ENCODE measurements at regions of chr16 and their contacts with region 1.

Region 1: DNA sequence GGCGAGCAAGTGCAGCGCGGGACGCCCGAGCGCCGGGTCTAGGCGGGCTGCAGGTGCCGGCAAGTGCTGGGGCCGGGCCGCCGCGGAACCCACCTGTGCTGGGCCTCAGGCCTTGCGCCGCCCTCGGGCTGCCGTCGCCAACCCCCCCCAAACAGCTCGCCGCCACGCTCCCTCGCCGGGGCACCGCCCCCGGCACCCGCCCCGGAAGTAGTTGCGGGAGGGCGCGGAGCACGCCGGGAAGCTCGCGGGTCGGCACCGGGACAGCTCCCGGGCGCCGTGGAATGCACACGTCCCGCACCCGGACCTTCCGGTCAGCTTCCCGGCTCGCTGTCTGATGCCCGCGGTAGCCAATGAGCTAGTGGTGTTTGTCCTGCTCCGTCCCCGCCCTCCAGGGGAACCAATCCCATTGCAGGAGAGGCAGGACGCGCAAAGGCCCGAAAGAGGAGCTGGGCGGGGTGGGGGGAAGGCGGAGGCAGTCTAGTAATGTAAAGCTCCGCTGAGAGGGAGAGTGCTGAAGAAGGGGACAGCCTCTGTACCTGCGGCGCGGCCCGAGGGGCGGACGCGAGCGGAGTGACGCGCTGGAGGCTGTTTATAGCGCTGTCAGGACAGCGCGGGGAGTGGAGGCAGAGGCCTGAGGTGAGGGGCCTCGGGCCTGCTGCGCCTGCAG is at the starts of genes ANKS3 and DNAAF8:
- DNase-seq: peak; percentile 76 to 84 (median 78)
- H3K4me3 ChIP-seq: peak within 1 kb of the TSS; percentile 88 to 99
- H3K4me3 Mint-ChIP-seq: peak within 1 kb of the TSS; percentile 91 to 94 (median 92)
- H3K27ac ChIP-seq: peak within 1 kb of the TSS; percentile 76
- H3K27ac Mint-ChIP-seq: peak within 1 kb of the TSS; percentile 90 to 96 (median 93)
- H3K4me1 ChIP-seq: peaks cover 15% of the 10 kb centered on the region
- H3K4me1 Mint-ChIP-seq: peaks cover 11 to 30% (median 21%) of the 10 kb centered on the region in 4 donors
- H3K27me3 ChIP-seq: no peaks in the 10 kb centered on the region
- H3K27me3 Mint-ChIP-seq: no peaks in the 10 kb centered on the region
- total RNA-seq, gene ANKS3: 28.5 to 33.9 TPM
- total RNA-seq, gene DNAAF8: 0.12 to 0.64 TPM

Region 2: DNA sequence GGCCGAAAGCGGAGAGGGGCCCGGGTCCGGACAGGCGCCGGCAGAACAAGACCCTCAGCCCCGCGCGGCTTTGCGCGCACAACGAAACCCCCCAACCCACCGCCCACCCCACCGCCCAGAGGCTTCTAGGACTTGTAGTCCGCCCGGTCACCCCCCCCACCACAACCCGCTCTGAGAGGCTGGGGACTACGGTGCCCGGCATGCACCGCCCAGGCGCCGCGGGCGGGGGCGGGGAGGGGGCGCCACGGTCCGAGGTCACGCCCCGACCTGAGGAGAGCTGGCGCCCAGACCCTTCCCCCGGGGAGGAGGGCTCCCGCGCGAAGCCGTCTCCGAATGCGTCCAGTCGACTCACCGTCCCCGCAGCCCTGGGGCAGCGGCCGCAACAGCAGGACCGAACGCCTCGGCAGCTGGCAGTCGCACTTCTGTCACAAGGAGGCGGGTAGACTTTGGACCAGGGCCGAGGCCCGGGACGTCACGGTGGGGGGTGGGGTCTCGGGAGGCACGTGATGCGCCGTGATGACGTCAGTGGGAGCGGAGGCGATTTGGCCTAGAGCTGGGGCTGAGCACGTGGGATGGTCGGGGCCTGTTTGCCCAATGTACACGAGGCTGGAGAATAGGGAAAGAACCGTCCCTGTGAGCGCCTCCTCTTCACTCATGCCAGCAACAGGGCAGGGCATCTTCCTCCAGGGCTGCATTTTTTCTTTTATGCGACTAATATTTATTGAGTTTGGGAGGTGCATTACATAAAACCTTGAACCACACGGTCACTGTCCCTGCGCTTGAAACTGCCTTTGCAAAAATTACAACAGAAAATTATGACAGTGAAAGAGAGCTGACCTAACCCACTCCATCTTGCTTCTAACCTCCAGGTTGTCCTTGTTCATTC is 195.6 kb before region 1 on chr16 and contains the start of gene CDIP1:
- CTCF ChIA-PET with region 1: no interaction called
- POLR2A ChIA-PET with region 1: no interaction called
- intact Hi-C with region 1: no loop called
- DNase-seq: peak; percentile 89 to 94 (median 90)
- H3K4me3 ChIP-seq: peak within 1 kb of the TSS; percentile 69 to 92
- H3K4me3 Mint-ChIP-seq: peak within 1 kb of the TSS; percentile 82 to 89 (median 84)
- H3K27ac ChIP-seq: peak within 1 kb of the TSS; percentile 77
- H3K27ac Mint-ChIP-seq: peak within 1 kb of the TSS; percentile 89 to 97 (median 94)
- H3K4me1 ChIP-seq: peaks cover 30% of the 10 kb centered on the region
- H3K4me1 Mint-ChIP-seq: peaks cover 18 to 35% (median 27%) of the 10 kb centered on the region in 4 donors
- H3K27me3 ChIP-seq: no peaks in the 10 kb centered on the region
- H3K27me3 Mint-ChIP-seq: no peaks in the 10 kb centered on the region
- total RNA-seq, gene CDIP1: 19.0 to 21.1 TPM

Region 3: DNA sequence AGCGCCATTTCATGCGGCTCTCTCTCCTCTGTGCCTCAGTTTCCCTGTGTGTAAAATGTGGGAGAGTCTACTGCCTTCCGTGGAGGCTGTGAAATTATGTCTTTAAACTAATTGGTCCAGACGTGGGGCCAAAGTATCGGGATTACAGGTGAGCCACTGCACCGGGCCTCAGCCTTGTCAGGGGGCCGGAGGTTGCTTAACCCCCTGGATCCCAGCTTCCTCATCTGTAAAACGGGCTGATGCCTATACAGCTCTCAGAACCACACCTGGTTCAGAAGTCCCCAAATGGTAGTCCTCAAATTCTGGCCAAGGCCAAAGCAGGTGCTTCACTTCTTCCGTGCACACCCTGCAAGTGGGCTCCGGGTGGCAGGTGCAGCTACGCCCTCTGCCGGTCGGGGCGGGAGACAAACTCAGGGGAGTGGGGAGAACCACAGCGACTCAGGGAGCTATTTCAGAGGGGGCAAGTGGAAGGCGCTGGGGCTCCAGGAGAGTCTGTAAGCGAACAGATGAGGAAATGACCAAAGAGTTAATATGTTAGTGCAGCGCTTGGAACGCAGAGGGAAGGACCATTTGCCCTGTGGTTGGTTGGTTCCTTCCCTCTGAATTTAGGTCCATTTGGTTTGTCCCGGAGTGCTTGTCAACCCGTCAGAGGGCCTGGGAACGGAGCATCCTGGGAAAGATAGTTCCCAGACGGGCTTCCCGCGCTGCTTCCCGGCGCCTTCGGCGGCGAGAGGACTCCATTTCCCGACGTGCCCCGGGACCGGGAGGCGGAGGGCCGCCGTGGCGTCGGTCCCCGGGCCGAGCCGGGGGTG is 110.0 kb before region 1 on chr16 and contains the start of gene MGRN1:
- CTCF ChIA-PET with region 1: interaction called, 17 read pairs
- POLR2A ChIA-PET with region 1: interaction called, 7 read pairs
- intact Hi-C with region 1: loop called (anchors 2 kb)
- DNase-seq: peak; percentile 93 to 95 (median 94)
- H3K4me3 ChIP-seq: peak within 1 kb of the TSS; percentile 38 to 81
- H3K4me3 Mint-ChIP-seq: peak within 1 kb of the TSS; percentile 92 to 99 (median 95)
- H3K27ac ChIP-seq: peak within 1 kb of the TSS; percentile 94
- H3K27ac Mint-ChIP-seq: peak within 1 kb of the TSS; percentile 92 to 100 (median 99)
- H3K4me1 ChIP-seq: peaks cover 25% of the 10 kb centered on the region
- H3K4me1 Mint-ChIP-seq: peaks cover 20 to 46% (median 34%) of the 10 kb centered on the region in 4 donors
- H3K27me3 ChIP-seq: no peaks in the 10 kb centered on the region
- H3K27me3 Mint-ChIP-seq: no peaks in the 10 kb centered on the region
- total RNA-seq, gene MGRN1: 62.2 to 64.1 TPM

Region 4: GRCh38 chr16:4693296-4693955 is 40.8 kb before region 1 on chr16 and contains the start of gene NUDT16L1:
- CTCF ChIA-PET with region 1: interaction called, 4 read pairs
- POLR2A ChIA-PET with region 1: interaction called, 40 read pairs
- intact Hi-C with region 1: loop called (anchors 1 kb)
- DNase-seq: peak; percentile 94 to 99 (median 98)
- H3K4me3 ChIP-seq: peak within 1 kb of the TSS; percentile 61 to 81
- H3K4me3 Mint-ChIP-seq: peak within 1 kb of the TSS; percentile 85 to 92 (median 88)
- H3K27ac ChIP-seq: peak within 1 kb of the TSS; percentile 81
- H3K27ac Mint-ChIP-seq: peak within 1 kb of the TSS; percentile 84 to 93 (median 91)
- H3K4me1 ChIP-seq: peaks cover 21% of the 10 kb centered on the region
- H3K4me1 Mint-ChIP-seq: peaks cover 2 to 22% (median 9%) of the 10 kb centered on the region in 4 donors
- H3K27me3 ChIP-seq: no peaks in the 10 kb centered on the region
- H3K27me3 Mint-ChIP-seq: no peaks in the 10 kb centered on the region
- total RNA-seq, gene NUDT16L1: 52.4 to 53.7 TPM

Region 5: GRCh38 chr16:4755687-4756086 is 21.5 kb after region 1 on chr16:
- CTCF ChIA-PET with region 1: no interaction called
- POLR2A ChIA-PET with region 1: no interaction called
- intact Hi-C with region 1: no loop called
- DNase-seq: no peak
- H3K4me3 ChIP-seq: no peak overlapping the region
- H3K4me3 Mint-ChIP-seq: no peak overlapping the region
- H3K27ac ChIP-seq: no peak overlapping the region
- H3K27ac Mint-ChIP-seq: no peak overlapping the region
- H3K4me1 ChIP-seq: no peaks in the 10 kb centered on the region
- H3K4me1 Mint-ChIP-seq: peaks cover 0 to 5% (median under 1%) of the 10 kb centered on the region in 4 donors
- H3K27me3 ChIP-seq: no peaks in the 10 kb centered on the region
- H3K27me3 Mint-ChIP-seq: no peaks in the 10 kb centered on the region

Region 6: DNA sequence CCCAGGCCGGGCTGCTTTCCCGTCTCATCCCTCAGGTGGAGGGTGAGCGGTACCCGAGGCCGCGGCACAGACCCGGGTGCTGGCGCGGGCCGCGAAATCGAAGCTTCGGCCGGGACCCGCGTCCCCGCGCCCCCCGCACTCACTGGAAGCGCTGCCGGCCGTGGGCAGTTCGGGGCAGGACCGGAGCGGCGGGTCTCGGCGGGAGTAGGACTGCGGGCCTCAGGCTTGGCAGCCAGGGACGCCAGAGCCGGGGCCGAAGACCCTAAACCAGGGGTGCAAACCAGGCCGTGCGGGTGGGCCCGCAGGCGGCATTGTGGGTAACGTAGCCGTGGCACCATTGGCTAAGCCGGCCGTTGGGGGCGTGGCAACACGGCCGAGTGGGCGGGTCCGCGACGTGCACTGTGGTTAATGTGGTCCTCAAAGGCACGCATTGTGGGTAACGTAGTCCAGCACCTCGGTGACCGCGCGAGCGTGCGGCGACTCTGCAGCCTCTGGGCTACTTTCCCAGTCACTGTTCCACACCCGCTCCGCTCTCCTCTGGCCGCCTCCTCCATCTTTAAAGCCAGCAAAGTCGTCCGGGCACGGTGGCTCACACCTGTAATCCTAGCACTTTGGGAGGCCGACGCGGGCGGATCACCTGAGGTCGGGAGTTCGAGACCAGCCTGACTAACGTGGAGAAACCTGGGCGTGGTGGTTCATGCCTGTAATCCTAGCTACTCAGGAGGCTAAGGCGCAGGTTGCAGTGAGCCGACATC is 32.9 kb after region 1 on chr16 and contains the start of gene ZNF500:
- CTCF ChIA-PET with region 1: no interaction called
- POLR2A ChIA-PET with region 1: interaction called, 72 read pairs
- intact Hi-C with region 1: loop called (anchors 1 kb)
- DNase-seq: peak; percentile 90 to 93 (median 93)
- H3K4me3 ChIP-seq: peak within 1 kb of the TSS; percentile 94 to 96
- H3K4me3 Mint-ChIP-seq: peak within 1 kb of the TSS; percentile 92 to 95 (median 94)
- H3K27ac ChIP-seq: peak within 1 kb of the TSS; percentile 79
- H3K27ac Mint-ChIP-seq: peak within 1 kb of the TSS; percentile 89 to 98 (median 94)
- H3K4me1 ChIP-seq: peaks cover 32% of the 10 kb centered on the region
- H3K4me1 Mint-ChIP-seq: peaks cover 16 to 50% (median 35%) of the 10 kb centered on the region in 4 donors
- H3K27me3 ChIP-seq: no peaks in the 10 kb centered on the region
- H3K27me3 Mint-ChIP-seq: no peaks in the 10 kb centered on the region
- total RNA-seq, gene ZNF500: 33.9 to 35.6 TPM

Region 7: GRCh38 chr16:4846891-4847773 is 112.9 kb after region 1 on chr16 and contains the starts of genes GLYR1 and UBN1:
- CTCF ChIA-PET with region 1: no interaction called
- POLR2A ChIA-PET with region 1: interaction called, 21 read pairs
- intact Hi-C with region 1: loop called (anchors 1 kb)
- DNase-seq: peak; percentile 99
- H3K4me3 ChIP-seq: peak within 1 kb of the TSS; percentile 74 to 78
- H3K4me3 Mint-ChIP-seq: peak within 1 kb of the TSS; percentile 89 to 93 (median 92)
- H3K27ac ChIP-seq: peak within 1 kb of the TSS; percentile 95
- H3K27ac Mint-ChIP-seq: peak within 1 kb of the TSS; percentile 90 to 96 (median 95)
- H3K4me1 ChIP-seq: peaks cover 55% of the 10 kb centered on the region
- H3K4me1 Mint-ChIP-seq: peaks cover 42 to 65% (median 53%) of the 10 kb centered on the region in 4 donors
- H3K27me3 ChIP-seq: no peaks in the 10 kb centered on the region
- H3K27me3 Mint-ChIP-seq: no peaks in the 10 kb centered on the region
- total RNA-seq, gene GLYR1: 117 to 121 TPM
- total RNA-seq, gene UBN1: 40.4 to 42.7 TPM